Panc1 (cell line): ENCODE measurements at regions of chr5 and their contacts with region 1.

Region 1: GRCh38 chr5:36507332-36507952 is 99.0 kb upstream of the SLC1A3 start:
- DNase-seq: peak; percentile 33
- ATAC-seq: peak; percentile 77; the same call in 1 of the 2 replicates
- H3K4me3 ChIP-seq: no peak overlapping the region
- H3K27ac ChIP-seq: no peak overlapping the region
- H3K4me1 ChIP-seq: no peaks in the 10 kb centered on the region
- H3K27me3 ChIP-seq: no peaks in the 10 kb centered on the region
- CTCF ChIP-seq: peak; percentile 90

Region 2: GRCh38 chr5:36269479-36270219 is 237.8 kb before region 1 on chr5:
- CTCF ChIA-PET with region 1: no interaction called
- POLR2A ChIA-PET with region 1: no interaction called
- in situ Hi-C with region 1: no loop called
- intact Hi-C with region 1: loop called (anchors 5 kb)
- DNase-seq: no peak
- ATAC-seq: no peak
- H3K4me3 ChIP-seq: no peak overlapping the region
- H3K27ac ChIP-seq: no peak overlapping the region
- H3K4me1 ChIP-seq: no peaks in the 10 kb centered on the region
- H3K27me3 ChIP-seq: 0 out of 2 replicates have a peak, but pooled peaks cover 2% of the 10 kb centered on the region
- CTCF ChIP-seq: no peak

Region 3: DNA sequence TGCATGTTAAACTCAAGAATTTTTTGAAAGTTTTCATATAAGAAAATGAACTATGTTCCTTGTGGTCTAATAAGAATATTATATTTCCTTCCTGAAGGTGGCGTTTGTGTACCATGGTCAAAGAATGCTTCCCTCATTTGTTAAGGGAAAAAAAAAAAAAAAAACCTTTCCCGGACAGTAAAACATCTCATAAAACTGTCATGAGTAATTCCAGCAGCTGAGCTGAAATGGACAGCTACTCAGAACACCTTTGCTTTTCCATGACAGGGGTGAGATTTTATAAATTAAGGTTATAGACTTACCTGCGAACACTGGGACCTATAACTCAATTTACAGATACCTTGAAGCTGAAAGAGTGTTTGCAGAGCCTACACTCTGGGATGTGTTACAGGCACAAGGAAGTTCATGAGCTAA is 92.6 kb before region 1 on chr5:
- CTCF ChIA-PET with region 1: interaction called, 3 read pairs
- POLR2A ChIA-PET with region 1: no interaction called
- in situ Hi-C with region 1: no loop called
- intact Hi-C with region 1: loop called (anchors 2 kb)
- DNase-seq: no peak
- ATAC-seq: 0 out of 2 replicates have a peak, but pooled peaks have one; percentile 58
- H3K4me3 ChIP-seq: no peak overlapping the region
- H3K27ac ChIP-seq: no peak overlapping the region
- H3K4me1 ChIP-seq: no peaks in the 10 kb centered on the region
- H3K27me3 ChIP-seq: peaks cover 2% of the 10 kb centered on the region; the same call in 1 of the 2 replicates
- CTCF ChIP-seq: peak; percentile 55; the same call in 1 of the 2 replicates

Region 4: DNA sequence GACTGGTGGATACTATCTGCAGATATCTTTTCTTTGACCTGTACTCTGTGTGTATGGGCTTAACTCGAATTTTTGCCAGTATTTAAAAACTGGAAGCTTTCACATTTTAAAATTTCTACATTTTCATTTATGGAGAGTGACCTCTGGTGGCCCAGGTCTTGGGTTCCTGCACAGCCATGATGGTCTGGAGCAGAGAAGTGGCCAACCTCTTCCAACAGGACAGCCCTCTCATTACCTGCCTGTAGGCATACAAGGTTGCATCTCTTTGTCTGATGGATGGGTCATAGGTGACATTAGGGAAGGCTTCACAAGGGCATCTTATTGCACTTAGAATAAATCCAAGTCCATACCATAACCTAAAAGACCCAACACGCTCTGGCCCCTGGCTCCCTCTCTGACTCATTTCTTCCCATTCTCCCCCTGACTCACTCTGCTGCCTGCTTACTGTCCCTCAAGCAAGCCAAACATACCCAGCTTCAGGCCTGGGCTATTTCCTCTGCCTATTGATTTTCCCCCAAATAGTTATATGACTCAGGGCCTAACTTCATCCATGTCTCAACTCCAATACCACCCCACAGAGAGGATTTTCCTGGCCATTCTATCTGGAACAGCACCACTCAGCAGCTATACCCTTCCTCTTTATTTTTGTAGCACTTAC is 14.3 kb before region 1 on chr5:
- CTCF ChIA-PET with region 1: no interaction called
- POLR2A ChIA-PET with region 1: interaction called, 11 read pairs
- in situ Hi-C with region 1: no loop called
- intact Hi-C with region 1: no loop called
- DNase-seq: no peak
- ATAC-seq: no peak
- H3K4me3 ChIP-seq: no peak overlapping the region
- H3K27ac ChIP-seq: no peak overlapping the region
- H3K4me1 ChIP-seq: no peaks in the 10 kb centered on the region
- H3K27me3 ChIP-seq: no peaks in the 10 kb centered on the region
- CTCF ChIP-seq: no peak

Region 5: DNA sequence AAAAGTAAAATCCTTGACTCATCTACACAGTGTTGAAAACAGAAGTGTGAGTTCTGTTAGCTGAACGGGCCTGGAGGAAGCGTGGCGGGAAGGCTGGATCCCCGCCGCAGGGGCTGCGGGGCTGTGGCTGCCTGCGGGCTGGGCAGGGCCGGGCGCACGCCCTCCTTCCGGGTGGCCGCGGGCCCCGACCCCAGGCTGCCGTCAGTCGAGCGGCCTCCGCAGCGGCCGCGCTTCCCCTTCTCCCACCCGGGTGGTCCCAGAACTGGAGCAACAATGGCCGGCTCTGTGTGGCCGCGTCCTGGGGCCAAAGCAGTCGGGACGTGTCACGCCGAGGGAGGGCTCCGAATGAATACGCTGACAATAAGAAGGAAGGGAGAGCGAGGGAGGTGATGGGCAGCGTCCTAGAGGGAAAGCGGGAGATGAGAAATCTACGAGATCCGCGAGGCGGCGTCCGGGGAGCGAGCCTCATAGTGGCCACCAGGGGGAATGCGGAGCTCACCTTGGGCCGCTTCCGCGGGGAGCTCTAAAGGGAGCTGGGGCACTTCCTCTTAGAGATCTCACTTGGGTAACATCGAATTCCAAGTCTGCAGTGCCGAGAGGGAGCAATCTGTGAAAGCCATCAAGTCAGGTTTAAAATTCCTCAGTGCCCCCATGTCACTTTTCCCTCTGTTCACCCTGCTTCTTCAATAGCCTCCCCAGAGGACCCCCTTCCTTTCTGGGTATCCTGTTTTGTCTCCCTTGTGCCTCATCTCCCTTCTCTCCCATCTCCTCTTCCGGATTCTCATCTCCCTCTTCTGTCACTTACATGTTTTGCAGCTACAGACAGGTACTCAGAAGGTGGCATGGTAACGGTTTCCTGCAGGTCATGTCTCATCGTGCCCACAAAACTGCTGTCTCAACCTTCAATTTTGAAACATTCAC is 182.9 kb after region 1 on chr5:
- CTCF ChIA-PET with region 1: interaction called, 4 read pairs
- POLR2A ChIA-PET with region 1: no interaction called
- in situ Hi-C with region 1: no loop called
- intact Hi-C with region 1: loop called (anchors 5 kb)
- DNase-seq: peak; percentile 52
- ATAC-seq: peak; percentile 96
- H3K4me3 ChIP-seq: peak overlapping the region; percentile 41 to 59
- H3K27ac ChIP-seq: no peak overlapping the region
- H3K4me1 ChIP-seq: peaks cover 4% of the 10 kb centered on the region; the same call in 1 of the 2 replicates
- H3K27me3 ChIP-seq: no peaks in the 10 kb centered on the region; the same call in 1 of the 2 replicates
- CTCF ChIP-seq: peak; percentile 93